ENCODE measurements at regions of chr16 and their contacts with region 1.

Region 1: DNA sequence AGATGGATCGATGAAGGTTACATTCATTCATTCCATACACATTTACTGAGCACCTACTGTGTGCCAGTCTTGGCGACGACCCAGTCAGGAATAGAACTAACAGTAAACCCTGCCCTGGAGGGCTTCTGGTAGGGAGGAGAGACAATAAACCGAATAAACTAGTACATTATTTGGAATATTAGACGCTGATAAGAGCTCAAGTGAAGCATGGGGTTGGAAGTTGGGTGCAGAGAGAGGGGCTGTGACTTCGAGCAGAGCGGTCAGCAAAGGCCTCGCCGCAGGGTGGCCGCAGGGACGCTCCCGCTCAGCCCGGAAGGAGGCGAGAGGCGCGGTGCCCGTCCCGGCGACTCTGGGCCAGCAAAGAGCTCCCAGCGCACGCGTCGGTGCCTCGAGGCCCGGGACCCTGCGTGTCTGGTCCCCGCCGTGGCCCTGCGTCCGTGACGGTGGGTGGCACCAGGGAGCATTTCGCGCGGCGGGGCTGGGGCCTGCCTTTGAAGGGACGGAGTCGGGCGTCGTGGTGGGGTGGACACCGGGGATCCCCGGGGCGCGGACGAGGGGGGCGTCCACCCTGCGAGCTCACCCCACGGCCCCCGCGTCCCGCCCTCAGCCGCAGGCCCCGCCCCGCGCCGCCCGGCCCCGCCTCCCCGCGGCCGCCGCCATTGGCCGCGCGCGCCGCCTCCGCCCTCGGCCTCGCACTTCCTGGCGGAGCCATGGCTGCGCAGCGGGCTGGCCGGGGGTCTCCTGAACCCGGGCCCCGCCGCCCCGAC is at the start of gene KLHL36:
- DNase-seq: peak; percentile 76
- H3K4me3 Mint-ChIP-seq: peak within 1 kb of the TSS; percentile 95
- H3K27ac Mint-ChIP-seq: peak within 1 kb of the TSS; percentile 92
- H3K4me1 Mint-ChIP-seq: peaks cover 48% of the 10 kb centered on the region
- H3K27me3 Mint-ChIP-seq: peaks cover 14% of the 10 kb centered on the region
- total RNA-seq, gene KLHL36: 39.3 and 42.6 TPM in 2 replicates

Region 2: GRCh38 chr16:84631886-84632285 is 16.1 kb before region 1 on chr16:
- intact Hi-C with region 1: loop called (anchors 2 kb)
- DNase-seq: no peak
- H3K4me3 Mint-ChIP-seq: no peak overlapping the region
- H3K27ac Mint-ChIP-seq: no peak overlapping the region
- H3K4me1 Mint-ChIP-seq: peaks cover 24% of the 10 kb centered on the region
- H3K27me3 Mint-ChIP-seq: peaks cover 49% of the 10 kb centered on the region

Region 3: DNA sequence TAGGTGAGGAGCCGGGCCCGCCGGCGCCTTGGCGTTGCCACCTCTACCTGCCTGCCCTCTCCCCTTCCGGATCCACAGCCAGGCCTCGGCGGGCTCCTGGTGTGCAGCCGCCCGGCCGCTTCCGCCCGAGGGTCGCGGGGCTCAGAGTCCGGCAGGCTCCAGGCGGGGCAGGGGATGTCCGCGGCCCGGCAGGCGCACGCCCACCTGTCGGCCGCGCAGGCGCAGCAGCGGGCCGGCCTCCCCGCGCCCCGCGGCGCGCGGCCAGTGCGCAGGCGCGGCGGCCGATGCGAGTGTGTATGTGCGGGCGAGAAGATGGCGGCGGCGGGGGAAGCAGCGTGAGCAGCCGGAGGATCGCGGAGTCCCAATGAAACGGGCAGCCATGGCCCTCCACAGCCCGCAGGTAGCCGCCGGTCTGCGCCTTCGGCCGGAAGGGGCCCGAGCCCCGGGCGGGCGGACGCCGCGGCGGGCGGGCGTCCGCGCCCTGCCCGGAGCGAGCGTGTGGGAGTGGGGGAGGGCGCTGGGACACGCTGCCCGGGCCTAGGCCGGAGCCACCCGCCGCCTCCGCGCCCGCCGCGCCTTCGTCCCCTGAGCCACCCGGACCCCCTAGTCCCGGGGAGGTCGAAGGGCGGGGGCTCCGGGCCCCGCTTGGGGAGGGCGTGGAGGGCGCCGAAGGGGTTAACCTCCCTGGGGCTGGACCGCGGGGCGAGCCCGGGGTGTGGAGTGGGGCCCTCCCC is 51.9 kb after region 1 on chr16 and contains the start of gene USP10:
- intact Hi-C with region 1: loop called (anchors 2 kb)
- DNase-seq: peak; percentile 84
- H3K4me3 Mint-ChIP-seq: peak within 1 kb of the TSS; percentile 99
- H3K27ac Mint-ChIP-seq: peak within 1 kb of the TSS; percentile 96
- H3K4me1 Mint-ChIP-seq: peaks cover 38% of the 10 kb centered on the region
- H3K27me3 Mint-ChIP-seq: peaks cover 4% of the 10 kb centered on the region
- total RNA-seq, gene USP10: 153 and 159 TPM in 2 replicates